ENCODE measurements at regions of chr17 and their contacts with region 1.

Region 1: DNA sequence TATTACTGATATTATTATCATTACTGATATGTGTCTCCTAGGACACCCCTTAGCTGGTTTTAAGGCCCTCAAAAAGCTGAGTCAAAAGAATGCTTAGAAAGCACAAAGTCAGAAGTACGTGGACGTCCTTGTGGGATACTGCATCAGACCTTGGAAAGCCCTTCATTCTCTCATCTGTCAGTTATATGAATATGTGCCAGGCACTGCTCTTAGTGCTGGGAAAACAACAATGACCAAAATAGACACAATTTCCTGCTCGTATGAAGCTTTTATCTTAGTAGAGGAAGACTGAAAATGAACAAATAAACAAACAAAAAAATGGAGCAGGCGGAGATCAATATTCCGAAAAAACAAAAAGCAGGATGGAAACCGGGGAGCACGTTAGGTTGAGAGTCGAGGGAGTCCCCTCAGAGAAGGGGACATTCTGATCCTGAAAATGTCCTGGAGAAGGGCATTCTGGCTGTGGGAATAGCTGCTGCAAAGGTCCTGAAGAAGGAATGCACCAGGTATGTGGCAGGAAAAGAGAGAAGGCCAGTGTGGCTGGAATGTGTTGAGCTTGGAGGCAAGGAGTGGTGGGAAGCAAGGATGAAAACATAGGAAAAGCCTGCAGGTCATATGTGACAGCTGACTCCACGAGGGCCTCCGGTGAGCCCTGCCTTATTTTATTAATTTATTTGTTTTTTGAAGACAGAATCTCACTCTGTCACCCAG is 15.5 kb upstream of the TMEM94 start:
- DNase-seq: no peak
- H3K4me3 ChIP-seq: no peak overlapping the region
- H3K27ac ChIP-seq: peak overlapping the region in 1 of 4 donors; percentile 51
- H3K4me1 ChIP-seq: peaks cover 0 to 17% (median 15%) of the 10 kb centered on the region in 4 donors
- H3K27me3 ChIP-seq: no peaks in the 10 kb centered on the region
- CTCF ChIP-seq: no peak
- EP300 ChIP-seq: no peak
- POLR2A ChIP-seq: no peak

Region 2: DNA sequence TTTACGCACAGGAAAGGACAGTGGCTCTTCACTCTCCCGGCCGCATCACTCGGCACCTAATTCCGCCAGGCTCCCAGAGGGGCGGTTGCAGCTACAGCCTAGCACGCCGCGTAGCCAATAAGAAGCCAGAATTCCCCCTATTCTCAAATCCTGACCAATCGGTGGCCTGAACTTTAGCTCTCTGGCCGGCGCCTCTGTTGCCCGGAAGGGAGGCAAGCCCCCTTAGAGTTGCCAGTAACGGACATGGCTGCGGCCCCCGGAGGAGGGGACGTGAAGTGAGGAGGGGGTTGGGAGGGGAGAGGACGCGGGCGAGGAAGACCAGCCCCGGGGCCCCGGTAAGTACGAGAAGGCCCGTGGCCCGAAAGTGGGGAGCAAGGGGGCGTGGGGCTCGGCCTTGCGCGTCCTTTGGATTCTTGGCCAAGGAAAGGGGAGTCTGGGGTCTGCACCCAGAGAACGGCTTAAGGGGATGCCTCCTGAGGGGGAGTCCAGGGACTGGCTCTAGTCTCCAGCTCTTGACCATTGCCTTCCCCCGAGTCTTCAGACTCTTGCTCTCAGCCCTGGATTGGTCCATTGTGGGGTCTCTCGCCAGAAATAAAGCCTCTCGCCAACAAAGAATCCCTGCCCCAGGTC is 15.6 kb after region 1 on chr17 and contains the start of gene TMEM94:
- intact Hi-C with region 1: loop called (anchors 1 kb)
- DNase-seq: peak; percentile 99
- H3K4me3 ChIP-seq: peak within 1 kb of the TSS; percentile 69 to 86 (median 78)
- H3K27ac ChIP-seq: peak within 1 kb of the TSS; percentile 85 to 91 (median 88)
- H3K4me1 ChIP-seq: peaks cover 0 to 28% (median 21%) of the 10 kb centered on the region in 4 donors
- H3K27me3 ChIP-seq: no peaks in the 10 kb centered on the region
- CTCF ChIP-seq: no peak
- EP300 ChIP-seq: no peak
- POLR2A ChIP-seq: peak in 1 of 2 donors; percentile 34
- total RNA-seq, gene TMEM94: 15.3 to 74.8 (median 32.4) TPM